Ovary (tissue), 10 donors: ENCODE measurements at regions of chr2 and their contacts with region 1.

Region 1: DNA sequence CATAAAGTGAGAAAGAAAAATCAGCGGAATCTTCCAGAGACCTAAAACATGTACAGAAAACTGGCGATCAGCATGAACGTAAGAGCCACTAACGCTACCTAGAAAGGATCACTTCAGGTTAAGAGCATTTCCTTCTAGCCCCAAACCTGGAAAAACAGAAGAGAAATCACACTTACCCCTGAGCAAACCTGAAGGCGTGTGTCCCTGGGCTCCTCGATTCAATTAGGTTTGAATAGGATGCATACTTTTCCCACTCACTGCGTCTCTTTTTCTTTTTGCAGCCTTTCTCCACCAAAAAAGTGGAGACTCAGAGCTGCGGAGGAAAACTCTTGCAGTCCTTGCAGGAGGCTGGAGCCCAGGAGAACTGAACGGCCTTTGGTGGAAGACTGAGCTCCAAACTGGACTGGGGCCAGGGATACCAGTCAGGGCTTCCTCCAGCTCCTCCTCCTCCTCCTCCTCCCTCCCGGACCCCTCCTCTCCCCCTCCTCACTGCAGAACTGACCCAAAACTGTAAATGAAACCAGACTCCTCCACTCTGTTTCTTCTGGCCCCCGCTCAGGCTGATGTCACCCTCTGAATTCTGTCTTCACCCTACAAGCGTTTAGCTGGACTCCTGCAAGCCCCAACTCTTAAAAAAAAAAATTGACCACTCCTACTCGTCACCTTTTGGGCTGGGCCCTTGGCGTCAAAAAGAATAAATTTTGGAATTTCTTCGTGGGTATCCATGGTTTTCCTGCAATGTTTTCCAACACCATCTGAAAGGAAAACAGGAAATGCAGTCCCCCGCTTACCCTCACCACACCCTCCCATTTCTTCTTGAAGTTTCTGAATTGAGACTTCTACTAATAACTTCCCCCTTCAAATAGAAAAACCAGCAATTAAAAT is at the start of gene COL6A3:
- DNase-seq: peak; percentile 89 to 94 (median 90)
- H3K4me3 ChIP-seq: peak within 1 kb of the TSS; percentile 55
- H3K27ac ChIP-seq: peak within 1 kb of the TSS; percentile 88
- H3K4me1 ChIP-seq: peaks cover 3% of the 10 kb centered on the region
- H3K27me3 ChIP-seq: no peaks in the 10 kb centered on the region
- CTCF ChIP-seq: no peak
- EP300 ChIP-seq: no peak
- POLR2A ChIP-seq: peak; percentile 35
- total RNA-seq, gene COL6A3: 113 to 520 (median 431) TPM

Region 2: GRCh38 chr2:237012577-237013267 is 401.3 kb before region 1 on chr2:
- intact Hi-C with region 1: no loop called
- DNase-seq: no peak
- H3K4me3 ChIP-seq: no peak overlapping the region
- H3K27ac ChIP-seq: no peak overlapping the region
- H3K4me1 ChIP-seq: peaks cover 3% of the 10 kb centered on the region
- H3K27me3 ChIP-seq: no peaks in the 10 kb centered on the region
- CTCF ChIP-seq: no peak
- EP300 ChIP-seq: no peak
- POLR2A ChIP-seq: no peak

Region 3: DNA sequence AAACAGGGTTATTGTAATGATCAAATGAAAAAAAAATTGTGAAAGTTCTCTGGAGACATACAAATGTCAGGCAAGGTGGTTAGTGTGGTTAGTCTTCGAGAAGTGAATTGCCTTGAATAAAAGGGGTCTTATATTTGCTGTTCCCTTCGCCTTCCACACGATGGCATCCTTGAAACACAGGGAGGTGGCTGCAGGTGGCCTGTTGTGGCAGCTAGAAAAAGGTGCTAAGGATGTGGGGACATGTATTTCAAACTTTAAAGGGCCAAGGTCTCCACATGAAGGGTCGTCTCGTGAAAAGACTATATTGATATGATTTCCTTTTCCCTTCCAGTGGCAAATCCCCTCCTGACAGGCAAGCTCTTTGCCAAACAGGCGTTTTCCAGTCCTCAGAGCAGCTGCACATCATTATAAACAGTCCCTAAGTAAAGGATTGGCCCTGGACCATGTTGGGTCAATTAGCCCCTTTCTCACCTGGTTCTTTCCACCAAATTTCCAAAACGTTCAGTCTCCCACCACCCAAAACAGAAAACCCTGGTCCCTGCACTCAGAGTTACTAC is 259.9 kb before region 1 on chr2:
- intact Hi-C with region 1: loop called in 2 of 4 experiments (anchors 5 to 10 kb)
- DNase-seq: peak in 4 of 5 donors; percentile 42 to 63 (median 54)
- H3K4me3 ChIP-seq: no peak overlapping the region
- H3K27ac ChIP-seq: no peak overlapping the region
- H3K4me1 ChIP-seq: peaks cover 5% of the 10 kb centered on the region
- H3K27me3 ChIP-seq: no peaks in the 10 kb centered on the region
- CTCF ChIP-seq: peak; percentile 27 to 78 (median 65)
- EP300 ChIP-seq: no peak
- POLR2A ChIP-seq: no peak

Region 4: DNA sequence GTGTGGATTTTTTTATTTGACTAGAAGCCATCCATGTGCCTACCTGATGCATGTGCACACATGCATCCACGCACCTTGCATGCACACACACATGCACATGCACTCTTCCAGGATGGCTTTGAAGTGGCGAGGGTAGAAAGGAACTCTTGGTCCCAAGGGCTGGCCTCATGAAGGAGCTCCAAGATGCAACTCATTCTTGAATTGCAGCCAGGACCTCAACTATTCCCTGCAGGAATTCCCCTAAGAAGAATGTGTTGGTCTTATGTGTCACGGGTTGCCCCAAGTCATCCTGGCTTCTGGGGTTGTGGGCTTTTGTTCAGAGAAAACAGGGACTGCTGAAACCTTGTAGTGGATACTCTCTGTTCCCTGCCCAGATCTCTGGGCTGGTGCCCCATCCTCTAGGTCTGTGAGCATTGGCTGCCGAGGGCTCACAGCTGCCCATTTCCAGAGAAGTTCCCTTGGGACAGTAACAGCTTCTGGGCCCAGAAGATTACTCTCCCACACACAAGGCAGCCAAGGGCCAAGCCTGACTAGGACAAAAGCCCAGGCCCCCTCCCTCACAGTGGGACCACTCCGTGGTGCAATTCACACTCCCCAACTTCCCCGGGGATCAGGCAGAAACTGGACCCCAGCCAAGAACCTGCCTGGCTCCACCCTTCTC is 190.7 kb before region 1 on chr2:
- intact Hi-C with region 1: no loop called
- DNase-seq: peak; percentile 47 to 74 (median 55)
- H3K4me3 ChIP-seq: no peak overlapping the region
- H3K27ac ChIP-seq: no peak overlapping the region
- H3K4me1 ChIP-seq: peaks cover 15% of the 10 kb centered on the region
- H3K27me3 ChIP-seq: no peaks in the 10 kb centered on the region
- CTCF ChIP-seq: no peak
- EP300 ChIP-seq: no peak
- POLR2A ChIP-seq: no peak

Region 5: GRCh38 chr2:237256887-237257286 is 157.1 kb before region 1 on chr2:
- intact Hi-C with region 1: loop called in 2 of 4 experiments (anchors 10 kb)
- DNase-seq: peak; percentile 61 to 77 (median 70)
- H3K4me3 ChIP-seq: no peak overlapping the region
- H3K27ac ChIP-seq: peak overlapping the region; percentile 80 to 86
- H3K4me1 ChIP-seq: peaks cover 16% of the 10 kb centered on the region
- H3K27me3 ChIP-seq: no peaks in the 10 kb centered on the region
- CTCF ChIP-seq: no peak
- EP300 ChIP-seq: no peak
- POLR2A ChIP-seq: no peak

Region 6: GRCh38 chr2:237354892-237355291 is 59.1 kb before region 1 on chr2:
- intact Hi-C with region 1: no loop called
- DNase-seq: no peak
- H3K4me3 ChIP-seq: no peak overlapping the region
- H3K27ac ChIP-seq: peak overlapping the region; percentile 22 to 50
- H3K4me1 ChIP-seq: peaks cover 13% of the 10 kb centered on the region
- H3K27me3 ChIP-seq: no peaks in the 10 kb centered on the region
- CTCF ChIP-seq: no peak
- EP300 ChIP-seq: no peak
- POLR2A ChIP-seq: no peak

Region 7: DNA sequence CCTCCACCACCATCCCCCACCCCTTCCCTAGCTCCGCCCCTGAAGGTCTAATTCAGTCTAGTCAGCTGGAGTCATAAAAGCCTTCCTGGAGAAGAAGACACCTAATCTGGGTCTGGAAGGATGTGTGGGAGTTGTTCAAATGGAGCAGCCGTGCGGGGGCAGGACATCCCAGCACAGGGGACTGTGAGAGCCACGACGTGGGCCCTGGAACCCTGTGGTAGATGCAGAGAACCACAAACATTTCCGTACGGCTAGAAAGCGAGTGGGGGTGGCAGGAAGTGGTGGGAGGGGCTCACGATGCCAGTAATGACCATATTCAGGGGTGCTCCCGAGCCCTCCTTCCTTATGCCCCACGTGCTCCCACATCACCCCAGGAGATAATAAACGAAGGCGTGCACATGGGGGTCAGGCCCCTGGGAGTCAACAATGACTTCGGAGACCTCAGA is 20.9 kb after region 1 on chr2:
- intact Hi-C with region 1: no loop called
- DNase-seq: peak in 1 of 5 donors; percentile 65
- H3K4me3 ChIP-seq: no peak overlapping the region
- H3K27ac ChIP-seq: peak overlapping the region; percentile 57 to 68
- H3K4me1 ChIP-seq: peaks cover 13% of the 10 kb centered on the region
- H3K27me3 ChIP-seq: no peaks in the 10 kb centered on the region
- CTCF ChIP-seq: no peak
- EP300 ChIP-seq: no peak
- POLR2A ChIP-seq: no peak

Region 8: DNA sequence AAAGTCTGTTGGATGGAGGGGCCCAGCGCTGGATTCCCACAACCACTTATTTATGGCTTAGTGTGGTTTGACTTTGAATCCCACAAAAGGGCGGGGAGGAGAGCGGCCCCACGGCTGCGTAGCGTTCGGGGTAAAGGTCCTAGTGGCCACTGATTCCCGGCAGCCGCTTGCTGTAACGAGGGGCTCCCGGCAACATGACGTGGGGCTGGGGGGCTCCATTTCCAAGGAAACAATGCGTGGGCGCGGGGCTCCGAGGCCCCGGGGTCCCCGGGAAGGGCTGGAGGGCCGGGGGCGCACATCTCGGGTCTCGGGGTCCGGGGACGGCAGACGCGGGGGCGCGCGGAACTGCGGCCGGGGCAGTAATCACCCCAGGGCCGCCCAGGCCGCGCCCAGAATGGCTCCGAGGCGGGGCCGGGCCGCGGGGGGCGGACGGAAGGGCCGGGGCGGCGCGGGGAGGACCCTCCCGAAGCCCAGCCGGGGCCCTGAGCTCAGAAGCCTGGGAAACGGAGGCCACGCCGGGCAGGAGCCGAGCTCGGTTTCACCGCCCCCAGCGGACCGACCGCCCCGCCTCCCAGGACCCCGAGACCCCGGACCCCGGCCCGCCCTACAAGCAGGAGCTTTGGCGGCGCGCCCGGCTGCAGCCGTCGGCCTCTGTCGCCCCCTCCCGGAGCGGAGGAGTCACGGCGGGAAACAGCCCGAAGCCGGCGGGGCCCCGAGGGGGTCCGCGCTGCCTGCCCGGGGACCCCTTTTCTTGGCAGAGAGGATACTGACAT is 61.1 kb after region 1 on chr2:
- intact Hi-C with region 1: loop called (anchors 2 to 10 kb)
- DNase-seq: peak; percentile 90 to 95 (median 93)
- H3K4me3 ChIP-seq: peak overlapping the region; percentile 62
- H3K27ac ChIP-seq: peak overlapping the region; percentile 90 to 92
- H3K4me1 ChIP-seq: peaks cover 13% of the 10 kb centered on the region
- H3K27me3 ChIP-seq: no peaks in the 10 kb centered on the region
- CTCF ChIP-seq: peak; percentile 95 to 97 (median 97)
- EP300 ChIP-seq: no peak
- POLR2A ChIP-seq: no peak